Cardiac septum (tissue), 1 donor: ENCODE measurements at regions of chr10 and their contacts with region 1.

Region 1: GRCh38 chr10:69392481-69393000 is 24.2 kb downstream of the TACR2 start:
- DNase-seq: peak; percentile 91

Region 2: DNA sequence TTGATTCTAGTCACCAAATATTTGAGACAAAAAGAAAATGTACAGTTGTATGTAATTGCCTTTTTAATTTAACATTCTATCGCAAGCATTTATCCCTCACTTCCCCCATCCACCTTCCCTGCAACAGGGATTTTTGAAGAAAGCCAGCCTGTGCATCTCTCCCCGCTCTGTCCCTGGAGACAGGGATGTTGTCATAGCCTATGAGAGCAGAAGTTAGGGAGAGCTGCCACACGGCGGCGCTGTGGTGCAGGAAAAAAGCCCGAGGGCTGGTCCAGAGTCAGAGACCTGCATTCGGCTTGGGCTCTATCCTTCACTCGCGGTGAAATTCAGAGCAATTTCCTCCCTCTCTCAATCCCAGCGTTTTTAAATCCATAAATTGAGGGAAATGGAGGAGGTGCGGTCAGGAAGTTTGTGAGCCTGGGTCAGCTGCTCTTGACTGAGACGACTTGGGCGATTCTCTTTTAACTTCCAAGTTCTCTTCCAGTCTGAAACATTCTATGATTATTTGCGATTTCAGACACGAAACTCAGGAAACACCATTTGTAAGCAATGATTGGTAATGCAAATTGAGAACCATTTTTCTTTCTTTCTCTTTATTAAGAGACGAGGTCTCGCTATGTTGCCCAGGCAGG is 154.9 kb before region 1 on chr10:
- intact Hi-C with region 1: loop called (anchors 1 kb)
- DNase-seq: peak; percentile 94

Region 3: GRCh38 chr10:70575874-70576802 is 1183.6 kb after region 1 on chr10:
- intact Hi-C with region 1: no loop called
- DNase-seq: no peak